ENCODE measurements at regions of chr16 and their contacts with region 1.

Region 1: GRCh38 chr16:31713071-31713944 is 160.3 kb upstream of the ZNF267 start:
- DNase-seq: peak; percentile 80
- ATAC-seq: peak; percentile 98
- H3K4me3 Mint-ChIP-seq: peak overlapping the region; percentile 99
- H3K27ac Mint-ChIP-seq: peak overlapping the region; percentile 97
- H3K4me1 Mint-ChIP-seq: peaks cover 49% of the 10 kb centered on the region
- H3K27me3 Mint-ChIP-seq: no peaks in the 10 kb centered on the region
- CTCF ChIP-seq: no peak

Region 2: GRCh38 chr16:31168848-31169247 is 544.5 kb before region 1 on chr16:
- CTCF ChIA-PET with region 1: no interaction called
- POLR2A ChIA-PET with region 1: interaction called, 21 read pairs
- intact Hi-C with region 1: no loop called
- DNase-seq: no peak
- ATAC-seq: no peak
- H3K4me3 Mint-ChIP-seq: no peak overlapping the region
- H3K27ac Mint-ChIP-seq: no peak overlapping the region
- H3K4me1 Mint-ChIP-seq: no peaks in the 10 kb centered on the region
- H3K27me3 Mint-ChIP-seq: no peaks in the 10 kb centered on the region
- CTCF ChIP-seq: no peak

Region 3: DNA sequence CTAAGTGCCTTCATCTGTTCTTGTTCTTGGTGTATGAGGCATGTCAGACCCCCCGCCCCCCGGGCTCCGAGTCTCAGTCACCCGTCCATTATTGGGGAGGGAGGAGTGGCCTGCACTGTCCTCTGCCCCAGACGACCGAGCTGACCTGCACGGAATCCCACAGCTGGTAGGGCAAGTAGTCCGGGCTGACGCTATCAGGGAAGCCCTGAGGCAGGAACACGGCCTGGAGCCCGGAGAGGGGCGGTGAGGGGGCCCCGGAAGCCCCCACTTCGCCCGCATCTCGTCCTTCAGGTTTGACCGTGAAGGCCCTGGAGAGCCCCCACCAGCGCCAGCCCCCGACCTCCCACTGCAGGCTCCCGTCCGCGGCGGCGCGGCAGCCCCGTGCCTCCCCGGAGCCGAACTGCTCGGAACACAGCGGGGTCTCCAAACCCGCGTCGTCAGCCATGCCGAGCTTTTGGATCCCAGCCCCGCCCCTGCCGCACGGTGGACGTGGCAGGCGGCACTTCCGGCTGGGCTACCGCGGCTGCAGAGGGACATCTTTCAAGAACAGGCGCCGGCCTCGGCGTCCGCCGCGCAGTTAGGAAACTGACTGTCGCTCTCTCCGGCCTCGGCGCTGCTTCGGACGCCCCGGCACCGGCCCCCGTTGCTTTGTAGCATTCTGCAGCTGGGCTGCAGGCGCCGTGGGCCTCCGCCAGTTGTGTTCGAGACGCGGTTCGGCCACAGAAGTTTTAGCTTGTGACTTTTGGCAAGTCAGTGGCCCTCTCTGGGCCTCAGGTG is 205.2 kb before region 1 on chr16 and contains the start of gene RUSF1:
- CTCF ChIA-PET with region 1: no interaction called
- POLR2A ChIA-PET with region 1: interaction called, 10 read pairs
- intact Hi-C with region 1: loop called (anchors 5 kb)
- DNase-seq: peak; percentile 81
- ATAC-seq: peak; percentile 94
- H3K4me3 Mint-ChIP-seq: peak within 1 kb of the TSS; percentile 94
- H3K27ac Mint-ChIP-seq: peak within 1 kb of the TSS; percentile 94
- H3K4me1 Mint-ChIP-seq: peaks cover 55% of the 10 kb centered on the region
- H3K27me3 Mint-ChIP-seq: no peaks in the 10 kb centered on the region
- CTCF ChIP-seq: no peak
- total RNA-seq, gene RUSF1: 58.6 and 59.7 TPM in 2 replicates

Region 4: DNA sequence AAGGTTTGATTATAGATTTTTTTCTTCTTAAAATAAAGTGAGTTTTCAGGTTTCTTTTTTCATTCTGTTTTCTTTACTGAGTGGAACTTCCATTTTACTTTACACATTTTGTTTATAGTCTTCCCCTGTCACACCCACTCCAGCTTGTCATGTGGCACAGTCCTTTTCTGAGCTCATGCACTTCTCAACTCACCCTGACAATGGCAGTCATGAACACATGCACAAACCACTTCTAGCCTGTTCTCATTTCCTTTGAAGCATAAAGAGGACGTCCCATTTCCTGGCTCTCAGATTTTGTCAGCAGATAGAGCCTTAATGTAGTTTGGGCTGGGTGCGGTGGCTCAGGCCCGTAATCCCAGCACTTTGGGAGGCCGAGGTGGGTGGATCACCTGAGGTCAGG is 17.6 kb before region 1 on chr16:
- CTCF ChIA-PET with region 1: interaction called, 3 read pairs
- POLR2A ChIA-PET with region 1: interaction called, 44 read pairs
- intact Hi-C with region 1: loop called (anchors 1 kb)
- DNase-seq: no peak
- ATAC-seq: peak; percentile 25
- H3K4me3 Mint-ChIP-seq: no peak overlapping the region
- H3K27ac Mint-ChIP-seq: no peak overlapping the region
- H3K4me1 Mint-ChIP-seq: peaks cover 6% of the 10 kb centered on the region
- H3K27me3 Mint-ChIP-seq: no peaks in the 10 kb centered on the region
- CTCF ChIP-seq: no peak

Region 5: DNA sequence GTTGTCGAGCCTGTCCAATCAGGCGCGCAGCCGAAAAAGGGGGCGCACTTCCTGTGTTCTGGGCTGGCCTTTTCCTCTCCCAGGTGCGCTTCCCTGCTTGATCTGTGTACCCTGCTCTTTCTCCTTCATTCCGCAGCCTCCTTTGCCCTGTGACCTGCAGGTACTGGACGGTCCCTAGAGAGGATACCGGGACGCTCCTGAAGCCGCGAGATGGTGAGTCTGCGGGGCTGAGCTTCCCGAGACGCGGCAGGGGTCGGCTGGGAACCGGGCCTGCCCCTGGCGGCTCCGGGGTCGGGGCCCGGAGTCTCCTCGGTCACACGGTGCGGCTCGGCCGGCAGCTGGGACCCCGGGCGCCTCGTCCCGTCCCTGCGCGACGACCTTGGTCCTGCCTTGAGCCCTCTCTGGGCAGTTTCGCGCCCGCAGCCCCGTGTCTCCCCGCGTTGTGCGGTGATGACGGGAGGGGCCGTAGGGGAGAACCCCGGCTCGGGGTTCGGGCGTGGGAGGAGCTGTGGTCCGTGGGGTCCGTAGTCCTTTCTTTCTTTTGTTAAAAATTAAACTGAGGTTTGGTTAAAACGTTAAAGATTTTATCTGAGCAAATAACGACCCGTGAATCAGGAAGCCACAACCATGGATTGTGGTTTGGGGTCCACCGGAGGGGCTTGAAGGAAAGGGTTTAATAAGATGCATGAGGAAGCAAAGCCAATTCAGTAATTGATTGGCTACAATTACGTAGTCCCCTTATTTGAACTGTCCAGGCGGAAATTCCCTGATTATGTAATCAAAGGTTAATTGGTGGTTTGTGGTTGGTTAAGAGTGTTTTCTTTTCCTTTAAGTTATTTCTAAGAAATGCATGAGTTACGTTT is 12.6 kb before region 1 on chr16:
- CTCF ChIA-PET with region 1: interaction called, 3 read pairs
- POLR2A ChIA-PET with region 1: interaction called, 44 read pairs
- intact Hi-C with region 1: loop called (anchors 1 kb)
- DNase-seq: peak; percentile 73
- ATAC-seq: peak; percentile 35
- H3K4me3 Mint-ChIP-seq: peak overlapping the region; percentile 86
- H3K27ac Mint-ChIP-seq: peak overlapping the region; percentile 78
- H3K4me1 Mint-ChIP-seq: peaks cover 24% of the 10 kb centered on the region
- H3K27me3 Mint-ChIP-seq: no peaks in the 10 kb centered on the region
- CTCF ChIP-seq: no peak

Region 6: DNA sequence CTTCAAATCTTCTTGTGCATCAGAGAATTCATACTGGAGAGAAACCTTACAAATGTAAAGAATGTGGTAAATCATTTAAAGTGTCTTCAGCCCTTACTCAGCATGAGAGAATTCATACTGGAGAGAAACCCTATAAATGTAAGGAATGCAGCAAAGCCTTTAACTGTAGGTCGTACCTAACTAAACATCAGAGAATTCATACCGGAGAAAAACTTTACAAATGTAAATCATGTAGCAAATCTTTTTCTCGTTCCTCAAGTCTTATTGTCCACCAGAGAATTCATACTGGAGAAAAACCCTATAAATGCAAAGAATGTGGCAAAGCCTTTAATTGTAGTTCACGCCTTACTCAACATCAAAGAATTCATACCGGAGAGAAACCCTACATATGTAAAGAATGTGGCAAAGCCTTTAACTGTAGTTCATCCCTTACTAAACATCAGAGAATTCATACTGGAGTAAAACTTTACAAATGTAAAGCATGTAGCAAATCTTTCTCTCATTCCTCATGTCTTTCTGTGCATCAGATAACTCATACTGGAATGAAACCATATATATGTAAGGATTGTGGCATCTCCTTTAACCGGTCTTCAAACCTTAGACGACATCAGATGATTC is 41.8 kb after region 1 on chr16:
- CTCF ChIA-PET with region 1: no interaction called
- POLR2A ChIA-PET with region 1: no interaction called
- intact Hi-C with region 1: no loop called
- DNase-seq: no peak
- ATAC-seq: no peak
- H3K4me3 Mint-ChIP-seq: no peak overlapping the region
- H3K27ac Mint-ChIP-seq: no peak overlapping the region
- H3K4me1 Mint-ChIP-seq: no peaks in the 10 kb centered on the region
- H3K27me3 Mint-ChIP-seq: no peaks in the 10 kb centered on the region
- CTCF ChIP-seq: no peak

Region 7: DNA sequence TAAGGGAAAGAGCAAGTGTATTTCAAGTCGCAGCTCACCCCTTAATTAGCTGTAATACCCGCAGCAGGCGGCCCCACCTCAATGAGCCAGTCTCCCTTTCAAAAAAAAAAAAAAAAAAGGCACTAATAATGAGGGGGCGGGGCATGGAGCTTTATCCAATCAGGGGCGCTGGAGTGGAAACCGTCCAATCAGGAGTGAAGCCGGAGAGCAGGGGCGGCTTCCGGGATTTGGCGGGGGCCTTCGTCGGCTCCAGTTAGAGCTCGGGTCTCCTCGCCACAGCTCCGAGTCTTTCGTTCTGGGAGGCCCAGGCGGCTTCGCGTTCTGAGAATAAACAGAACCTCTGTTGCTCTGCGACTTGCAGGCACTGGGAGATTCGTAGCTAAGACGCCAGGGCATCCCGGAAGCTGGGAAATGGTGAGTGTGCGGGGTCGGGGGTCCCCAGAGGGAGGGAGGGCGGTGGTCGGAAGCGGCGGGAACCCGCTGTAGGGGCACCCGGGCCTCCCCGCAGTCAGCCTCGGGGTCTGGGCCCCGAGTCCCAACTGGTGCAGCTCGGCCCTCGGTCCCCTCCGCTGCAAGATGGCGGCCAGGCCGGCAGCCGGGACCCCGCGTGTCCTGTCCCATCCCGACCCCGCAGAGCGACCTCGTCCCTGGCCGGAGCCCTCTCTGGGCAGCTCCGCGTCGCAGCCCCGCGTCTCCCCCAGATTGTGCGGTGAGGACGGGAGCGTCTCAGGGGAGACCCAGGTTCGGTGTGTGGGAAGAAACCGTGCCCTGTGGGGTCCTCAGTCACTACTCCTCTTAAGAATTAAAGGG is 160.5 kb after region 1 on chr16 and contains the start of gene ZNF267:
- CTCF ChIA-PET with region 1: interaction called, 3 read pairs
- POLR2A ChIA-PET with region 1: interaction called, 20 read pairs
- intact Hi-C with region 1: loop called (anchors 1 kb)
- DNase-seq: peak; percentile 79
- ATAC-seq: peak; percentile 69
- H3K4me3 Mint-ChIP-seq: peak within 1 kb of the TSS; percentile 83
- H3K27ac Mint-ChIP-seq: peak within 1 kb of the TSS; percentile 87
- H3K4me1 Mint-ChIP-seq: peaks cover 83% of the 10 kb centered on the region
- H3K27me3 Mint-ChIP-seq: no peaks in the 10 kb centered on the region
- CTCF ChIP-seq: no peak
- total RNA-seq, gene ZNF267: 93.5 and 99.0 TPM in 2 replicates